ENCODE measurements at regions of chr17 and their contacts with region 1.

Region 1: DNA sequence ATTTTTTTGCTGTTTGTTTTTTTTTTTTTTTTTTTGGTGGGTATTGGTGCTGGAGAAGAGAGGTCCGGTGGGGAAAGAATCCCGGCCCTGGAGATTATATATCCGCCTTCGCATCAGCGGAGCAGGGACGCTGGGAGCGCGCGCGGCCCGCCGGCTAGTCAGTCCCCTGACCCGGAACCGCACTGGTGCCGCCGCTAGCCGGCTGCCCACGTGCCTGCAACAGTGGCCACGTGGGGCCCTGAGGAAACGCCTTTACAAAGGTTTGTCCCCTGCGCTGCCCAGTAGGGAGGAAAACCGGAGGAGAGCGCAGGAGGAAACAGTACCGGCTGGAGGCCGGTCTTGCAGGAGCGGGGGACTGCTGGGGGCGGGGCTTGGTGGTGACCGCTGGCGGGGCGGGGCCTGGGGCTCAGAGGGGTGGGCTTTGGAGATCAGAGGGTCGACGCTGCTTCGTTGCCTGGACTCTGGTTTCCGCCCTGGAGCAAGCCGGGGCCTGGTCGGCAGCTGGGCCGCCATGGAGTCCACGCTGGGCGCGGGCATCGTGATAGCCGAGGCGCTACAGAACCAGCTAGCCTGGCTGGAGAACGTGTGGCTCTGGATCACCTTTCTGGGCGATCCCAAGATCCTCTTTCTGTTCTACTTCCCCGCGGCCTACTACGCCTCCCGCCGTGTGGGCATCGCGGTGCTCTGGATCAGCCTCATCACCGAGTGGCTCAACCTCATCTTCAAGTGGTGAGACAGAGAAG is at the start of gene G6PC3:
- DNase-seq: peak; percentile 34 to 88 (median 60)
- ATAC-seq: peak; percentile 32
- H3K4me3 ChIP-seq: peak within 1 kb of the TSS; percentile 77
- H3K4me3 Mint-ChIP-seq: peak within 1 kb of the TSS; percentile 95
- H3K27ac ChIP-seq: peak within 1 kb of the TSS; percentile 61 to 71
- H3K27ac Mint-ChIP-seq: peak within 1 kb of the TSS; percentile 91
- H3K4me1 ChIP-seq: peaks cover 37% of the 10 kb centered on the region
- H3K4me1 Mint-ChIP-seq: peaks cover 49% of the 10 kb centered on the region
- H3K27me3 ChIP-seq: no peaks in the 10 kb centered on the region
- H3K27me3 Mint-ChIP-seq: no peaks in the 10 kb centered on the region
- CTCF ChIP-seq: no peak
- total RNA-seq, gene G6PC3: 5.6 to 5.8 TPM

Region 2: DNA sequence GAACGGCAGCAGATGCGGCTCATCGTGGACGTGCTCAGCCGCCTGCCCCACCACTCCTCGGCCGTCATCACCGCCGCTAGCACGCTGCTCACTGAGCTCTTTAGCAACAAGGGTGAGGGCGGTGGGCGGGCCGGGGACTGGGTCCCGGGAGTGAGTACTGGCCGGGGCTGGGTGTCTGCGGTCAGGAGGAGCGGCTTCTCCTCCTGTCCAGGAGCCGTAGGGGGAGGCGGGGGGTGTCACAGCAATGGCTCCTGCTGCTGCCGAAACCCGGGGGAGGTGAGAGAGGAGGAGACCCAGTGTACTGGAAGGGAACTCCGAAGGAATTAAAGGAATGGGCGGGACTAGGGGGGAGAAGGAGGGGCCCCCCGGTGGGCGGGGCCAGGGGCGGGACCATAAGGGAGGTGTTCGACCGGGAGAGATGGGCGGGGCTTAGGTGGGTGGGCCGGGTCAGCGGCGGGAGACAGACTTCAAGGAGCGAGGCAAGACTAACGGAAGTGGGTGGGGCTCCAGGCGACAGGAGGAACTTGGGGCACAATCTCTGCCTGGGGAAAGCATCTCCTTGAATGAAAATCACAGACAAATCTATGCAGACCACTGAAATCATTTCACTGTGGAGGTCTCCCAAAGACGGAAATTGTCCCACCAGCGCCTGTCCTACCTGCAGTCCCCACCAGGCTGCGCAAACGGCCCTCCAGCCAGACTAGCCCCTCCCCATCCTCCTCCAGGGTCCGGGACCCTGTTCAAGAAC is 63.9 kb before region 1 on chr17:
- CTCF ChIA-PET with region 1: no interaction called
- POLR2A ChIA-PET with region 1: no interaction called
- intact Hi-C with region 1: loop called in 1 of 2 experiments (anchors 2 kb)
- DNase-seq: peak; percentile 90 to 100 (median 98)
- ATAC-seq: peak; percentile 80
- H3K4me3 ChIP-seq: peak overlapping the region; percentile 91
- H3K4me3 Mint-ChIP-seq: peak overlapping the region; percentile 91
- H3K27ac ChIP-seq: no peak overlapping the region
- H3K27ac Mint-ChIP-seq: no peak overlapping the region
- H3K4me1 ChIP-seq: peaks cover 52% of the 10 kb centered on the region
- H3K4me1 Mint-ChIP-seq: peaks cover 22% of the 10 kb centered on the region
- H3K27me3 ChIP-seq: peaks cover 0 to 8% of the 10 kb centered on the region in 2 experiments
- H3K27me3 Mint-ChIP-seq: peaks cover 33% of the 10 kb centered on the region
- CTCF ChIP-seq: no peak

Region 3: GRCh38 chr17:44014437-44015172 is 56.0 kb before region 1 on chr17 and contains the start of gene TMEM101:
- CTCF ChIA-PET with region 1: no interaction called
- POLR2A ChIA-PET with region 1: no interaction called
- intact Hi-C with region 1: loop called in 1 of 2 experiments (anchors 2 kb)
- DNase-seq: peak; percentile 81 to 95 (median 86)
- ATAC-seq: peak; percentile 99
- H3K4me3 ChIP-seq: peak within 1 kb of the TSS; percentile 94
- H3K4me3 Mint-ChIP-seq: peak within 1 kb of the TSS; percentile 100
- H3K27ac ChIP-seq: no peak within 1 kb of the TSS
- H3K27ac Mint-ChIP-seq: peak within 1 kb of the TSS; percentile 87
- H3K4me1 ChIP-seq: peaks cover 19% of the 10 kb centered on the region
- H3K4me1 Mint-ChIP-seq: peaks cover 22% of the 10 kb centered on the region
- H3K27me3 ChIP-seq: no peaks in the 10 kb centered on the region
- H3K27me3 Mint-ChIP-seq: peaks cover 5% of the 10 kb centered on the region
- CTCF ChIP-seq: no peak
- total RNA-seq, gene TMEM101: 8.8 to 9.7 TPM

Region 4: DNA sequence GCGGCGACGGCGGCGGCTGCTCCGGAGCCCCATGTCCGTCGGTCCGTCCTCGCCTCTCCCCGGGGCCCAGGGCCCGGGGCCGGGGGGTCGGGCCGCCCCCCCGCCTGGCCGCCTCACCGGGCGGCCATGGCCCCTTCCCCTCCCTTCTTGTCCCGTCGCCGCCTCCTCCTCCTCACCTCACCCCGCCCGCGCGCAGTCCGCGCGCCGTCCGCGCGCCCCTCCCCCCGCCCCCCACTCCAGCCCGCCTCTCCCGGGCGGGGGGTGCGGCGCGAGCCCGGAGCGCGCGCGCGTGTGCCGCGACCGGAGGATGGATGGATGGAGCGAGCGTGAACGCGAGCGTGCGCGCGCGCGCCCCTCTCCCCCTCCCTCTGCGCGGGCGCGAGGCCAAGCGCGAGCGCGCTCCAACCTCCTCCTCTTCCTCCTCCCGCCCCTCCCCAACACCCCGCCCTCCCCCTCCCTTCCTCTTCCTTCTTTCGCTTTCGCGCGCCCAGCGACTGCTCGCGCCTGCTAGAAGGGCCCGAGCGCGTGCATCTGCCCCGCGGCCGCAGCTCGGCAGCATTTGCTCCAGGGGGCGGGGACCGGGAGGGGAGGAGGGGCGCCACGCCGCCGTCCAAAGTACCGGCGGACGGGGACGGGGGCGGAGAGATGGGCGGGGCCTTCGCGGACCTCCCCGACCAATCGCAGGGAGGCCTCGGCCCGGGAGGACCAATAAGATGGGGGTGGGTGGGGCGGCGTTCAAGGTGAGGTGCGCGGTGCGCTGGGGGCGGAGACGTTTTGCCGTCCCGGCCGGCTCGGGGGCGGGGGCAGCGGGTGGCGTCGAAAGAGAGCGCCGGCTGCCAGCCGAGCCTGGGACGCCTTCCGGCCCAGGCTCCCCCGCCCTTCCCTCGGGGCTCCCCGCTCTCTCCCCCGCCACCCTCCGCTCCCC is 129.2 kb after region 1 on chr17 and contains the start of gene ATXN7L3:
- CTCF ChIA-PET with region 1: no interaction called
- POLR2A ChIA-PET with region 1: no interaction called
- intact Hi-C with region 1: loop called in 1 of 2 experiments (anchors 5 kb)
- DNase-seq: peak; percentile 99 to 100 (median 99)
- ATAC-seq: peak; percentile 80
- H3K4me3 ChIP-seq: peak within 1 kb of the TSS; percentile 94
- H3K4me3 Mint-ChIP-seq: peak within 1 kb of the TSS; percentile 93
- H3K27ac ChIP-seq: peak within 1 kb of the TSS; percentile 83 to 87
- H3K27ac Mint-ChIP-seq: peak within 1 kb of the TSS; percentile 93
- H3K4me1 ChIP-seq: peaks cover 45% of the 10 kb centered on the region
- H3K4me1 Mint-ChIP-seq: peaks cover 46% of the 10 kb centered on the region
- H3K27me3 ChIP-seq: no peaks in the 10 kb centered on the region
- H3K27me3 Mint-ChIP-seq: no peaks in the 10 kb centered on the region
- CTCF ChIP-seq: no peak
- total RNA-seq, gene ATXN7L3: 85.2 to 99.2 TPM